B cell (primary cell): ENCODE measurements at regions of chr7 and their contacts with region 1.

Region 1: GRCh38 chr7:74206589-74207120 is 3.2 kb upstream of the LAT2 start:
- DNase-seq: peak; percentile 89
- ATAC-seq: peak; percentile 52
- H3K4me3 ChIP-seq: peak overlapping the region in 3 of 5 experiments; percentile 43 to 57 (median 46)
- H3K4me3 Mint-ChIP-seq: peak overlapping the region; percentile 74
- H3K27ac ChIP-seq: no peak overlapping the region
- H3K27ac Mint-ChIP-seq: no peak overlapping the region
- H3K4me1 ChIP-seq: peaks cover 27 to 48% of the 10 kb centered on the region in 2 donors
- H3K4me1 Mint-ChIP-seq: peaks cover 54% of the 10 kb centered on the region
- H3K27me3 ChIP-seq: no peaks in the 10 kb centered on the region
- H3K27me3 Mint-ChIP-seq: no peaks in the 10 kb centered on the region
- CTCF ChIP-seq: peak; percentile 98

Region 2: GRCh38 chr7:74149603-74150002 is 57.1 kb before region 1 on chr7:
- CTCF ChIA-PET with region 1: no interaction called
- POLR2A ChIA-PET with region 1: no interaction called
- intact Hi-C with region 1: no loop called
- DNase-seq: no peak
- ATAC-seq: no peak
- H3K4me3 ChIP-seq: no peak overlapping the region
- H3K4me3 Mint-ChIP-seq: no peak overlapping the region
- H3K27ac ChIP-seq: no peak overlapping the region
- H3K27ac Mint-ChIP-seq: no peak overlapping the region
- H3K4me1 ChIP-seq: no peaks in the 10 kb centered on the region
- H3K4me1 Mint-ChIP-seq: peaks cover 3% of the 10 kb centered on the region
- H3K27me3 ChIP-seq: no peaks in the 10 kb centered on the region
- H3K27me3 Mint-ChIP-seq: peaks cover 4% of the 10 kb centered on the region
- CTCF ChIP-seq: no peak

Region 3: DNA sequence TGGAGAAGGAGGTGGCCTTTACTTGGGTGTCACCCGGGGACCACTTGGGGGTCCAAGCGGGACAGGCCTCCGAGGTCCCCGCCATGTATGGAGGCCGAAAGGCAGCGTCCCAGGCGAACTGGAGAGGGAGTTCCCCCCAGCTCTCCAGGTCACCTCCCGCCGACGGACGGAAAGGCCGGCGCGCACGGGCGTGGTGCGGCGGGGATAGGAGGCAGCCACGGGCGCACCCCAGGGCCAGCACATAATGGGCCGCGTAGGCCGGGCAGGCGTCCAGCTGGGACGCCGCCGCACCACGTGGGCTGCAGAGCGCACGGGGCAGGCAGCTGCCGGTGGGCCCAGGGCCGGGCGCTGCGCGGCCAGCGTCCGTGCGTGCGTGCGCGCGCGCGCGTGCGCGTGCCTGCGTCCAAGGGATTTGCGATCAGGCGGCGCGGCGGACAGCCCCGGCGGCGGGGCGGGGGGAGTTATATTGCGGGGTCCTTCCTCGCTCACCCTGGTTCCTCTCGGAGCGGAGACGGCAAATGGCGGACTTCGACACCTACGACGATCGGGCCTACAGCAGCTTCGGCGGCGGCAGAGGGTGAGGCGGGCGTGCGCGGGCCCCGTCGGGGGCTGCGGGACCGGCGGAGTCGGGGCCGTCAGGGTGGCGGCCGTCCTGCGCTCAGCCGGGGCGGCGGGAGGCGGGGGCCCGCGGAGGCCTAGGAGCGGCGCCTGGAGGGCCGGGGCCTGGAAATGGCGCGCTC is 32.6 kb before region 1 on chr7 and contains the start of gene EIF4H:
- CTCF ChIA-PET with region 1: interaction called, 16 read pairs
- POLR2A ChIA-PET with region 1: interaction called, 10 read pairs
- intact Hi-C with region 1: no loop called
- DNase-seq: peak; percentile 98
- ATAC-seq: peak; percentile 84
- H3K4me3 ChIP-seq: peak within 1 kb of the TSS; percentile 67 to 93 (median 84)
- H3K4me3 Mint-ChIP-seq: peak within 1 kb of the TSS; percentile 95
- H3K27ac ChIP-seq: peak within 1 kb of the TSS; percentile 88 to 94
- H3K27ac Mint-ChIP-seq: peak within 1 kb of the TSS; percentile 98
- H3K4me1 ChIP-seq: peaks cover 44 to 52% of the 10 kb centered on the region in 2 donors
- H3K4me1 Mint-ChIP-seq: peaks cover 42% of the 10 kb centered on the region
- H3K27me3 ChIP-seq: no peaks in the 10 kb centered on the region
- H3K27me3 Mint-ChIP-seq: no peaks in the 10 kb centered on the region
- CTCF ChIP-seq: no peak
- total RNA-seq, gene EIF4H: 180 and 199 TPM in 2 replicates

Region 4: GRCh38 chr7:74231232-74231590 is 24.6 kb after region 1 on chr7:
- CTCF ChIA-PET with region 1: interaction called, 55 read pairs
- POLR2A ChIA-PET with region 1: interaction called, 11 read pairs
- intact Hi-C with region 1: no loop called
- DNase-seq: peak; percentile 92
- ATAC-seq: peak; percentile 84
- H3K4me3 ChIP-seq: no peak overlapping the region
- H3K4me3 Mint-ChIP-seq: peak overlapping the region; percentile 79
- H3K27ac ChIP-seq: peak overlapping the region; percentile 83 to 92
- H3K27ac Mint-ChIP-seq: peak overlapping the region; percentile 97
- H3K4me1 ChIP-seq: peaks cover 59 to 83% of the 10 kb centered on the region in 2 donors
- H3K4me1 Mint-ChIP-seq: peaks cover 59% of the 10 kb centered on the region
- H3K27me3 ChIP-seq: no peaks in the 10 kb centered on the region
- H3K27me3 Mint-ChIP-seq: no peaks in the 10 kb centered on the region
- CTCF ChIP-seq: no peak

Region 5: GRCh38 chr7:74254129-74254857 is 47.6 kb after region 1 on chr7 and contains the start of gene RFC2:
- CTCF ChIA-PET with region 1: interaction called, 18 read pairs
- POLR2A ChIA-PET with region 1: interaction called, 8 read pairs
- intact Hi-C with region 1: loop called (anchors 1 kb)
- DNase-seq: peak; percentile 97
- ATAC-seq: peak; percentile 97
- H3K4me3 ChIP-seq: peak within 1 kb of the TSS; percentile 72 to 99 (median 91)
- H3K4me3 Mint-ChIP-seq: peak within 1 kb of the TSS; percentile 97
- H3K27ac ChIP-seq: peak within 1 kb of the TSS; percentile 66 to 90
- H3K27ac Mint-ChIP-seq: peak within 1 kb of the TSS; percentile 95
- H3K4me1 ChIP-seq: peaks cover 16 to 44% of the 10 kb centered on the region in 2 donors
- H3K4me1 Mint-ChIP-seq: peaks cover 30% of the 10 kb centered on the region
- H3K27me3 ChIP-seq: no peaks in the 10 kb centered on the region
- H3K27me3 Mint-ChIP-seq: no peaks in the 10 kb centered on the region
- CTCF ChIP-seq: peak; percentile 29
- total RNA-seq, gene RFC2: 33.2 and 36.4 TPM in 2 replicates

Region 6: DNA sequence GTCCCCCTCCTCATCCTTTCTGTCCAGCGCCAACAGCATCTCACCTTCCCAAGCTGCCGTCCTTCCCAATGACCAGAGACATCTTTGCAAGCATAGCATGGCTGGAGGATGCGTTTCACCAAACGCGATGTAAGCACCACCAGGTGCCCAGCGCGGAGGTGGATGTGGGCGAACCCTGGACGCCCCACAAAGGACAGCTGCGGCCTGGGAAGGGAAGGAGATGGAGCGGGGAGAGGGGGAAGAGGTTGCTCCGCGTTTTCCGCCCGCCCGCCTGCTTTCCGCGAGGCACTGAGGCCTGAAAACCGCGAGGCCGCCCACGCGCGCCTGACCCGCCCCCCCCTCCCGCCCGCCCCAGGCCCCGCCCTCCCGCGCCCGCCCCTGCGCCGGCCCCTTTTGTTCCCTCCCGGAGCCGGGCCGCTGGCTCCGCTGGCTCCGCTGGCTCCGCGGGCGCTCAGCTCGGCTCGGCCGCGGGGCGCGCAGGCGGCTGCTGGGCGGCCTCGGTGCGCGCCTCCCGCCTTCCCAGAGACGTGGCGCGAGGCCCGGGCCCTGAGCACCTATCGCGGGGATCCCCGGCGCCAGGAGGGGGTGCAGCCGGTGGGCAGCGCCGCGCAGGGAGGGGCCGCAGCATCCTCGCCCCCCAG is 82.5 kb after region 1 on chr7 and contains the start of gene CLIP2:
- CTCF ChIA-PET with region 1: interaction called, 48 read pairs
- POLR2A ChIA-PET with region 1: interaction called, 7 read pairs
- intact Hi-C with region 1: loop called (anchors 1 kb)
- DNase-seq: peak; percentile 85
- ATAC-seq: peak; percentile 74
- H3K4me3 ChIP-seq: peak within 1 kb of the TSS; percentile 34 to 73 (median 61)
- H3K4me3 Mint-ChIP-seq: peak within 1 kb of the TSS; percentile 96
- H3K27ac ChIP-seq: peak within 1 kb of the TSS; percentile 29 to 62
- H3K27ac Mint-ChIP-seq: peak within 1 kb of the TSS; percentile 93
- H3K4me1 ChIP-seq: peaks cover 32 to 47% of the 10 kb centered on the region in 2 donors
- H3K4me1 Mint-ChIP-seq: peaks cover 58% of the 10 kb centered on the region
- H3K27me3 ChIP-seq: no peaks in the 10 kb centered on the region
- H3K27me3 Mint-ChIP-seq: no peaks in the 10 kb centered on the region
- CTCF ChIP-seq: no peak
- total RNA-seq, gene CLIP2: 47.9 and 49.5 TPM in 2 replicates